PC-9 (cell line): ENCODE measurements at regions of chr2 and their contacts with region 1.

Region 1: GRCh38 chr2:64000630-64001381 is 18.4 kb downstream of the VPS54 start:
- DNase-seq: no peak
- H3K4me3 ChIP-seq: no peak overlapping the region
- H3K27ac ChIP-seq: no peak overlapping the region
- H3K4me1 ChIP-seq: no peaks in the 10 kb centered on the region
- H3K27me3 ChIP-seq: no peaks in the 10 kb centered on the region
- CTCF ChIP-seq: no peak; the same call in 1 of the 2 replicates

Region 2: DNA sequence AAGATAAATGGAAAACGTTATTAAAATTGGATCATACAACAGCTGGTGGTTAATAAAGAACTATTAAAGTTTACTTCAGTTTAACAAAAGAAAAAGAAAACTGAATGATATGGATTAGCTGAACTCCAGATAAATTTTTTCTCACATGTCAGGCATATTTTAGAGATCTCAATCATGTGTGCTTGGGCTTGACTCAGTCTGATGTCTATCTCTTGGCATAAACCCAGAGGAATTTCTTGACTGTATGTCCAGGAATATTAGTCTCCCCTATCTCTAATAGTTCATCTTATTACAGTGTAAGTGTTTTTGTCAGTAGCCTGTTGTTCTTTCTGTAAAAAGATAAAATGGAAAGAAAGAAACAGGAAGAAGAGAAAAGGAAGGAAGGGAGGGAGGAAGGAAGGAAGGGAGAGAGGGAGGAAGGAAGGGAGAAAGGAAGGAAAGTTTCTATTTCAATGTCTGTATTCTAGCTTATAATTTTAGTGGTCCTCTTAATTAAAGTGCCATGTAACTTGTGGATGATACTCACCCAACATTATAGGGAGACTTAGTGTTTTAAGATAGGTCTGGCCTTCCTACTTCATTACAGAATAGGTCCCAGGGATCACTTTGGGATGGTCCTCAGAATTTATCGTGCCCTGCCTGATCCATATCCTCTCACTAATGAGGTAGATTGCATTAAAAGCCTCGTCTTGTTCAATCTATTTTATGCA is 258.8 kb before region 1 on chr2:
- CTCF ChIA-PET with region 1: no interaction called
- POLR2A ChIA-PET with region 1: no interaction called
- intact Hi-C with region 1: no loop called
- DNase-seq: peak in 1 of 2 experiments; percentile 69
- H3K4me3 ChIP-seq: no peak overlapping the region
- H3K27ac ChIP-seq: no peak overlapping the region
- H3K4me1 ChIP-seq: no peaks in the 10 kb centered on the region
- H3K27me3 ChIP-seq: no peaks in the 10 kb centered on the region
- CTCF ChIP-seq: no peak

Region 3: GRCh38 chr2:63875131-63875527 is 125.7 kb before region 1 on chr2:
- CTCF ChIA-PET with region 1: no interaction called
- POLR2A ChIA-PET with region 1: no interaction called
- intact Hi-C with region 1: no loop called
- DNase-seq: no peak
- H3K4me3 ChIP-seq: no peak overlapping the region
- H3K27ac ChIP-seq: no peak overlapping the region
- H3K4me1 ChIP-seq: peaks cover 10% of the 10 kb centered on the region
- H3K27me3 ChIP-seq: no peaks in the 10 kb centered on the region
- CTCF ChIP-seq: no peak

Region 4: DNA sequence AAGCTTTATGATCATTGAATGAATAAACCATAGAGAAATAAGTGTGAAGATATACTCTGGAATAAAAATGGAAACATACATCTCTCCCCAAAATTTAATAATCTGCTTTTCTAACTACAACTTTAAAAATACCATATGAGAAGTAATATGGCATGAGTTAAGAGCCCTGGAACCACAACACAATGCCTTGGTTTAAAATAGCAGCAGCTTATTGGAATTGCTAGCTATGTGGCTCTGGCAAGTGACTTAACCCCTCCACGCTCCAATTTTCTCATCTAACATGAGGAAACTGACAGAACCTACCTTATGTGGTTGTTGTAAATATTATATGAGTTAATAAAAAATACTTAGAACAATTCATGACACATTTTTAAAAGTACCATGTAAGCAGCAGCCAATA is 58.0 kb before region 1 on chr2:
- CTCF ChIA-PET with region 1: no interaction called
- POLR2A ChIA-PET with region 1: no interaction called
- intact Hi-C with region 1: loop called (anchors 5 kb)
- DNase-seq: no peak
- H3K4me3 ChIP-seq: no peak overlapping the region
- H3K27ac ChIP-seq: no peak overlapping the region
- H3K4me1 ChIP-seq: no peaks in the 10 kb centered on the region
- H3K27me3 ChIP-seq: no peaks in the 10 kb centered on the region
- CTCF ChIP-seq: no peak